ENCODE measurements at regions of chr22 and their contacts with region 1.

Region 1: DNA sequence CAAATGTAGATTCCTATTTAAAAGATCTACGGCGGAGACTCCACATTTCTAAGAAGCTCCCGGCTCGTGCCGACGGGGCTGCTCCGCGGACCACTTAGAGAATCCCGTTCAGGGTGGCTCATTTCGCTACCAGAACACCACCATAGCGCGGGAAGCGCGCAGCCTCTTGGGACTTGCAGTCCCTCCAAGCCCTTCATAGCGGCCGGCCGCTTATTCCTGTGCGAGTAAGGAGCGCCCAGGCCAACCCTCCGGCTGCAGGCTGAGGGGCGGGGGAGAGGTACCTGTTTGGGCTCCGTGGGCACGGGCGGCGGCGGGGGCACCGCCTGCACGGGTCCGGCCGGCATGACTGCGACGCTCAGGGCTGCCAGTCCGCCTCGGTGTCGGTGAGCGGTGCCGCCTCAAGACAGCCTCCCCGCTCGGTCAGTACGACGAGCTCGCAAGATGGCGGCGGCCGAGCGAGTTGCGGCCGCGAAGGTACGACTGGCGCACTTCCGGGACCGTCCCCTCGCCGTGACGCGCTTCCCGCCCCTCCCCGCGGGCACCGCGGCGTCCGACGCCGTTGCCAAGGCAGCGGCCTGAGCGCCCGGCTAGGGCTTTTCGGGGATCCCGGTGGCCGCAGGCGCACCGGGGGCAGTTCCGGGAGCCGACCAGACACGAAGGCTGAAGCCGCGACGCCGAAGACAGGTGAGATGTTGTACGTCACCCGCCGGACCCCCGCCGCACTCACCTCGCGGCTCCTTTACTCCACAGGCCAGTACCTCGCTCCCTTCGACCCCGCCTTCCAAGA is at the starts of genes CCDC157 and SF3A1:
- H3K4me3 ChIP-seq: peak within 1 kb of the TSS; percentile 98
- H3K27ac ChIP-seq: peak within 1 kb of the TSS; percentile 82
- H3K4me1 ChIP-seq: peaks cover 5% of the 10 kb centered on the region; the same call in 1 of the 2 replicates
- CTCF ChIP-seq: peak; percentile 52; the same call in 1 of the 2 replicates

Region 2: DNA sequence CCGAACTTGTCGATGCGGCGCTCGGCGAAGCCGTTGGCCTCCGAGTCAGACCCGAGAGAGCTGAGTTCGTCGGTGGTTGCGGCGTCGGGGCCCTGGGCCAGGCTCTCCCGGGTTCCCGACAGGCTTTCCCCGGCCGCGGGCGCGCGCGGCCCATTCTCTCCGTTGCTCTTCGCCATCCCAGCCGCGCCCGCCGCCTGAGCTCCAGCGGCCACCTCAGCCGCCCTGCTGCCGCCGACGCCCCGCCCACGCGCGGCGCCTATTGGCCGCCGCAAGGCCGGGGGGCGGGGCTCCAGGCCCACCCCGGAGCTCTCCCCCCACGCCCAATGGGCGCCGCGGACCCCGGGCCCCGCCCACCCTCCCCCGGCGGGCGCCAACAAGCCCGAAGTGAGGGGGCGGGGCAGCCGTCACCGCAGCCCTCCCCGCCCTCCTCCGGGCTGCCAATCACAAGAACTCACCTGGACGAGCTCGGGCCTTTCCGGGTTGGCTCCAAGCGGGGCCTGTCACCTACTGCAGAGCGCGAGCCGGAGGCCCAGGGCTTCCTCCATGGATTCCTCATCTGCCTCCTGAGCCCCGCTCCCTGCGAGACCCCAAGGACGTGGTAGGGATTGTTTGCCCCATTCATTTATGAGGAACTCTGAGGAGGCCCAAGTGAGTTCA is 29.8 kb before region 1 on chr22 and contains the start of gene TBC1D10A:
- CTCF ChIA-PET with region 1: no interaction called
- POLR2A ChIA-PET with region 1: interaction called, 40 read pairs
- H3K4me3 ChIP-seq: peak within 1 kb of the TSS; percentile 85
- H3K27ac ChIP-seq: peak within 1 kb of the TSS; percentile 72
- H3K4me1 ChIP-seq: peaks cover 11% of the 10 kb centered on the region
- CTCF ChIP-seq: no peak

Region 3: GRCh38 chr22:30332561-30332960 is 24.1 kb before region 1 on chr22:
- CTCF ChIA-PET with region 1: no interaction called
- POLR2A ChIA-PET with region 1: interaction called, 40 read pairs
- H3K4me3 ChIP-seq: no peak overlapping the region
- H3K27ac ChIP-seq: no peak overlapping the region
- H3K4me1 ChIP-seq: peaks cover 4% of the 10 kb centered on the region; the same call in 1 of the 2 replicates
- CTCF ChIP-seq: no peak

Region 4: DNA sequence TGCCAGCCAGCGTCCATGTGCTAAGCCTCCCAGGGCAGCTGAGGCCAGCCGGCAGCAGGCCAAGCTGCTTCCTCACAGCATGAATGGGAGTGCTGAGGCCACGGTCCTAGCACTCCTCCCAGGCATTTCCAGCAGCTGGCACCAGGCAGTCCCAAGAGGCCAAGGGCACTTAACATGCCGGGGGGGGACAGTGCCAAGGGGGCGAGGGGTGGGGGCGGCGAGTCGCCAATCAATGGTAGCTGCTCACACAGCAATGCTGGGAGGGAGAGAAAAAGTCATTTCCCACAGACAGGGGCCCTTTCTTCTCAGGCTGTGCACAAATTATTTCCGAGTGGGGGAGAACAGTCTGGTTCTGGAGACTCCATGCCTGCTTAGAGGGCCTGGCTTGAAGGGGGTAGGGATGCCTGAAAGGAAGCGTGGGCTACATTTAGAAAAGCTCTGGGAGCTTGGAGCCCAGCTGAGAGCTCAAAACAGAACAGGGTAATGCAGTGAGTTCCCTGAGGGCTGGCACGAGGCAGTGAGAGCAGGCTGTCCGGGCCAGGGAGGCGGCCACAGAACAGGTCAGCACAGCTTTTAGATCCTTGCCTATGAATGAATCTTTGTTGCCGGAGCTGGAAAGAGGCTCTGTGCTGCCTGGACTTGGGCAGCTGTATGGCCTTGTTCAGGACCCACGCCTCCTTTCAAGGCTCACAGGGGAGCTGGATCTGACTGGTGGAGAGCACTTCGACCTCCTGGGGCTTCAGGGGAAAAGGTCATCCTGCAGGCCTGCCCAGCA is 15.5 kb before region 1 on chr22:
- CTCF ChIA-PET with region 1: no interaction called
- POLR2A ChIA-PET with region 1: interaction called, 12 read pairs
- H3K4me3 ChIP-seq: no peak overlapping the region
- H3K27ac ChIP-seq: no peak overlapping the region
- H3K4me1 ChIP-seq: no peaks in the 10 kb centered on the region
- CTCF ChIP-seq: no peak

Region 5: GRCh38 chr22:30368431-30368830 is 11.8 kb after region 1 on chr22:
- CTCF ChIA-PET with region 1: interaction called, 3 read pairs
- POLR2A ChIA-PET with region 1: interaction called, 14 read pairs
- H3K4me3 ChIP-seq: no peak overlapping the region
- H3K27ac ChIP-seq: no peak overlapping the region
- H3K4me1 ChIP-seq: no peaks in the 10 kb centered on the region
- CTCF ChIP-seq: no peak

Region 6: DNA sequence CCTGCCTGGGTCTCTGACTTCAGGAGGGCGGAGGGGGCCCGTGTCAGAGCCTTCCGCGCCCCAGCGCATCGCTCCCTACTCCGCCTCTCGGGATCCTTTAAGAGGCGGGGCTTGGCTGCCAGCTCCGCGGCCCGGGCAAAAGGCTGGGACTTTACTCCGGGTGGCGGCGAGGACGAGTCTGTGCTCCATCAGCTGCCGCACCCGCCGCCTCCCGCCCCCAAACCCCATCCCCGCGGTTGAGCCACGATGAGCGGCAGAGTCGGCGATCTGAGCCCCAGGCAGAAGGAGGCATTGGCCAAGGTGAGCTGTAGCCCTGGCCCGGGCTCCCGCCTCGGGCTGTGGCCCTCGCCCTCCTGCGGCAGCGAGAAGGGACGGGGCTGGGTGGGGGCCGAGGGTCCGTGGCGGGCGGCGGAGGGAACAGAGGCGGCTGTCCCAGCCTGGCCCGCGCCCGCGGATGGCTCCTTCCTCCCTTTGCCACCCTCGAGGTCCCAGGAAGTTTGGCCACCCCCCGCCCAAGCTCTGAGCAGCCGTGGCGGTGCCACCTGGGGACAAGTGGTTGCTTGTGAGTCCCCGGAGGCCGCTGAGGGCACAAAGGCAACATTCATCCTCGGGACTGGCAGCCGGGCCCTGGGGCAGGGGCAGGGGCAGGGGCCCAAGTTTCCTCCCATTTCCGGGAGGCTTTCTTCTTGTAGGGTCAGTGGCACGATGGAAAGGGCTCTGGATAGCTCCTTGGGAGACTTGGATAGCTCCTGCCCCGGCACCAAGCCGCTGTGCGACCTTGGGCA is 40.4 kb after region 1 on chr22 and contains the start of gene SEC14L2:
- CTCF ChIA-PET with region 1: no interaction called
- POLR2A ChIA-PET with region 1: interaction called, 14 read pairs
- H3K4me3 ChIP-seq: peak within 1 kb of the TSS; percentile 80
- H3K27ac ChIP-seq: no peak within 1 kb of the TSS; the same call in 1 of the 2 replicates
- H3K4me1 ChIP-seq: peaks cover 3% of the 10 kb centered on the region; the same call in 1 of the 2 replicates
- CTCF ChIP-seq: no peak